ENCODE measurements at regions of chr19 and their contacts with region 1.

Region 1: DNA sequence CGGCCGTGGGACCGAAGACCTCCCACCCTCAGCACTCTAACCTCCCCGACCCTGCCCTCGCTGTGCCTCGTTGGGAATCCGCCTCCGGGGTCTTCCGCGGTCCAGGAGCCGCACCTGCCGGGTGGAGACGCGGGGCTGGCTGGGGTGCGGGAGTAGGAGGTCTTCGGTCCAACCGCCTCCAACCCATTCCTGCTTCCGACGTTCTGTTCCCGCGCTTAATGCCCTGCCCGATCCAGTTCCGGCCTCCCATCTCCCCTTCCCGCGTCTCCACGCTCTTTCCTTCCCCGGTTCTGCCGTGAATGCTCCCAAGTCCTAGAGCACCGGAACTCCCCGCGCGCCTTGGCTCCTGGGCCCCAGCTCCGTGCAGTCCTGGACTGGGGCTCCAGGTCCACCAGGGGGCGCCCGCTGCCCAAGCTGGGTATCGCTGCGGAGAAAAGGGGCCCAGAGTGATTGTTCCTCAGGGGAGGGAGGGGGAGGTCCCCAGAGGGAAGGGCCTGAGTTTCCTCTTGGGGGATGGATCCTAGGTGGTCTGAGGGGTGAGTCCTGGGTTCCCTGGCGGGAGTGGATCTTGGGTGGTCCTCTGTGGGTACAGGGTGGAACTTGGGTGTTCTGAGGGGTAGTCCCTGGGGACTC is 14.1 kb upstream of the TNFSF9 start:
- DNase-seq: peak; percentile 81 to 93 (median 88)
- H3K4me3 ChIP-seq: peak overlapping the region; percentile 84
- H3K4me3 Mint-ChIP-seq: peak overlapping the region; percentile 92 to 98 (median 94)
- H3K27ac ChIP-seq: peak overlapping the region; percentile 70
- H3K27ac Mint-ChIP-seq: peak overlapping the region; percentile 13 to 96 (median 92)
- H3K4me1 ChIP-seq: peaks cover 16% of the 10 kb centered on the region
- H3K4me1 Mint-ChIP-seq: peaks cover 32 to 38% (median 33%) of the 10 kb centered on the region in 3 donors
- H3K27me3 ChIP-seq: no peaks in the 10 kb centered on the region
- H3K27me3 Mint-ChIP-seq: no peaks in the 10 kb centered on the region

Region 2: DNA sequence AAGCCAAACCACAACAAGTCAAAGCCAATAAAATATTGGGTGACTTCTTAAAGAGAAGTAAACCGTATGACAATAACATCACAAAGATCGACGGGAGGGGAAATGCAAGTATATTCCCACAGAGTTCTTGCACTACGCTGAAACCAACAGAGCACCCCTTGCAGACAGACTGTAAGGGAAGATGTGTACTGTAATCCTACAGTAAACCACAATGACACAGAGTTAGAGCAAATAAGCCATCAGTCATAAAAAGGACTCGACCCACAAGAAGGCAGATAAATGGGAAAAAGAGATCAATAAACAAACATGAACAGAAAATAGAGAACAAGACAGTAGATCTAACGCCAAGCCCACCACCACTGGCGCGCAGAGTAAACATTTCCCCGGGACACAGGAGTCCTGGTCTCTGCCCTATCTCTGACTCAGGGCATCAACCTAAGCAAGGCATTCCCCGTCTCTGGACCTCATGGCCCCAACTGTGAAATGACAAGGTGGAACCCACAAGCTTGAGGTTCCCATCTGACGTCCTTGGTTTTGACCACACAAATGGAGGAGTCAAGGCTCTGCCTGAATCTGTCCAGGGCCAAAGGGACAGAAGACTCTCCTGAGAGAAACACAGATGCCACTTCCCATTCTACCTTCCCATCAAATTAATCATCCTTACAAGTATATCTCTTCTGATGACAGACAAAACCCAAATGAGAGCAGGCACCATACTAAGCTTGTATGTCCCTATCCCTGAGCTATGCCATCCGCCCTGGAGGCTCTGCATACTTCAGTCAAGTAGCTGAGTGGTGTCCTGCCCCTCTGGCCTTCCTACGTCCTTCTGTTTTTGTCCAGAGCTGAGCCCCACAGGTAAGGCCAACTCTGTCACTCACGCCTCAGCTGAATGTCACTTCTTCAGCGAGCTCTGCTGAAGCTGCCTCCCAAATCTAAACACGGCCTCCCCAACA is 909.2 kb before region 1 on chr19:
- CTCF ChIA-PET with region 1: no interaction called
- POLR2A ChIA-PET with region 1: no interaction called
- DNase-seq: no peak
- H3K4me3 ChIP-seq: no peak overlapping the region
- H3K4me3 Mint-ChIP-seq: no peak overlapping the region
- H3K27ac ChIP-seq: no peak overlapping the region
- H3K27ac Mint-ChIP-seq: peak overlapping the region in 6 of 8 donors; percentile 11 to 74 (median 38)
- H3K4me1 ChIP-seq: no peaks in the 10 kb centered on the region
- H3K4me1 Mint-ChIP-seq: peaks cover 22 to 35% (median 25%) of the 10 kb centered on the region in 3 donors
- H3K27me3 ChIP-seq: no peaks in the 10 kb centered on the region
- H3K27me3 Mint-ChIP-seq: no peaks in the 10 kb centered on the region

Region 3: GRCh38 chr19:6632002-6632621 is 115.3 kb after region 1 on chr19:
- CTCF ChIA-PET with region 1: interaction called, 14 read pairs
- POLR2A ChIA-PET with region 1: no interaction called
- DNase-seq: peak; percentile 71 to 85 (median 77)
- H3K4me3 ChIP-seq: no peak overlapping the region
- H3K4me3 Mint-ChIP-seq: peak overlapping the region in 1 of 7 donors; percentile 3
- H3K27ac ChIP-seq: no peak overlapping the region
- H3K27ac Mint-ChIP-seq: peak overlapping the region in 4 of 8 donors; percentile 47 to 76 (median 71)
- H3K4me1 ChIP-seq: no peaks in the 10 kb centered on the region
- H3K4me1 Mint-ChIP-seq: peaks cover 14 to 17% (median 15%) of the 10 kb centered on the region in 3 donors
- H3K27me3 ChIP-seq: no peaks in the 10 kb centered on the region
- H3K27me3 Mint-ChIP-seq: peaks cover 4 to 5% of the 10 kb centered on the region in 2 donors